ENCODE measurements at regions of chr1 and their contacts with region 1.

Region 1: DNA sequence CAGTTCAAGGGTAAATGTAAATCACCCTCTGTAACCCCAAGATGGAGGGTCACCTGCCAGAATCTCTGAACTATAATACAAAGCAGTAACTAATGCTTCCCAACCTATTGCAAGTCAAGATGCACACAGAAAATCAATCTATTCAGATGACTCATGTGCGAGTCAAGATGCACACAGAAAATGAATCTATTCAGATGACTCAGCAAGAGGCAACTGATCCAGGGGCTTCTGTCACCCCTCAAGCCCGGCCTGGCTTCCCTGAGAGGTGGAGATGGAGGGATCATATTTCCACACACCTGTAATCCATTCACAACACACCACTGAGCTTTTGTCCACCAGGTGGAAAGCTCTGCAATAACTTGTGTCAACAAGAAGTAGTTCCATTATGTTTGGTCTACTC is 17.4 kb upstream of the HIVEP3 start:
- DNase-seq: no peak
- H3K4me3 Mint-ChIP-seq: no peak overlapping the region
- H3K27ac Mint-ChIP-seq: no peak overlapping the region
- H3K4me1 Mint-ChIP-seq: peaks cover 19% of the 10 kb centered on the region
- H3K27me3 Mint-ChIP-seq: peaks cover 8% of the 10 kb centered on the region

Region 2: DNA sequence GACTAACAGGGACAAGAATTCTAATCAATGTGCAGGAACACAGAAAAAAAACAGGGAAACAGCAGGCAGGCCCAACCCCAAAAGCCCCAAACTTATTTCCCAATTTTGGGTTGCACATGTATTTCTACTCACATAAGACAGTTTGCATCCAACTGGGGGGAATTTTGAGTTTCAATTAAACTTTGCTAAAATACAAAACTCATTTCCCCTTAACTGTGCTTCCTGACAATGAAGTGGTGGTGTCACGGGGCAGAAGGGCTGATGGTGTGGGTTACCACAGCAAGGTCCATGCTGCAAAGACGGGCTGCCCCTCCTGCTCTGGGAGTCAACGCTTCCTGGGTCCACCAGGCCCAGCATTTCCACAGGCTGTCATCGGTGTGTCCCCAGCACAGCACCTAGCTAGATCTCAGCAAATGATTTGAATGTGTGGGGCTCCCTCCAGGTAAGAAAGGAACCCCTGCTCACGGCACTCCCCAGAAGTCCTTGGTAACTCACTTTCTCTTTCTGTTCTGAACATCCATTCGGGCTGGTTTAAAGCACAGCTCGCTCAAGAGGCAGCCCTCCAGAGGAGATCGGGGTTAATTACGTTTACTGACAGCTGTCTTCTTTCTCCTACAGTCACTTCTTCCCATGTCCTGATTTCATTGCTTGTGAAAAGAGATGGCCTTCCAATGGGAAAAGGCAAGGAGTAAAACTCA is 44.8 kb before region 1 on chr1:
- intact Hi-C with region 1: loop called (anchors 5 kb)
- DNase-seq: peak; percentile 61
- H3K4me3 Mint-ChIP-seq: peak overlapping the region; percentile 83
- H3K27ac Mint-ChIP-seq: peak overlapping the region; percentile 96
- H3K4me1 Mint-ChIP-seq: peaks cover 36% of the 10 kb centered on the region
- H3K27me3 Mint-ChIP-seq: no peaks in the 10 kb centered on the region

Region 3: DNA sequence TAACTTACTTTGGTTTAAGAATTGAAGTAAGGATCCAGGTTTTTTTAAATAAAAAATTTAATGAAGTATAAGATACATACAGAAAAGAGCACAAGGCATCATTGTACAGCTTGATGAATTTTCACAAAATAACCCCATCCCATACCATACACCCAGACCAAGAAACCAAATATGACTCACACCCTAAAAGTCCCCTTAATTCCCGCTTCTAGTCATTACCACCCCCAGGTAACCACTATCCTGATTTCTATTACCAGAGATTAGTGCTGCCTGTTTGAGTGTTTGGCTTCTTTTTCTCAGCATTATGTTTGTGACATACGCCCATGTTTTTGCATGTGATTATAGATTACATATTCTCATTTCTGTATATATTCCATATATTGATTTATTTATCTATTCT is 81.1 kb after region 1 on chr1:
- intact Hi-C with region 1: loop called (anchors 5 kb)
- DNase-seq: no peak
- H3K4me3 Mint-ChIP-seq: no peak overlapping the region
- H3K27ac Mint-ChIP-seq: no peak overlapping the region
- H3K4me1 Mint-ChIP-seq: peaks cover 21% of the 10 kb centered on the region
- H3K27me3 Mint-ChIP-seq: peaks cover 6% of the 10 kb centered on the region

Measured in activated T-helper 2 cell treated with anti-CD3 and anti-CD28 coated beads, Interferon-gamma antibody, Interleukin-2, Interleukin-4, amounts not matched to agents 10 μg/mL and 5 μg/mL and 100 μg/mL, durations not matched to agents 14 hours and 24 hours and 36 hours (primary cell).